ENCODE measurements at regions of chr11 and their contacts with region 1.

Region 1: DNA sequence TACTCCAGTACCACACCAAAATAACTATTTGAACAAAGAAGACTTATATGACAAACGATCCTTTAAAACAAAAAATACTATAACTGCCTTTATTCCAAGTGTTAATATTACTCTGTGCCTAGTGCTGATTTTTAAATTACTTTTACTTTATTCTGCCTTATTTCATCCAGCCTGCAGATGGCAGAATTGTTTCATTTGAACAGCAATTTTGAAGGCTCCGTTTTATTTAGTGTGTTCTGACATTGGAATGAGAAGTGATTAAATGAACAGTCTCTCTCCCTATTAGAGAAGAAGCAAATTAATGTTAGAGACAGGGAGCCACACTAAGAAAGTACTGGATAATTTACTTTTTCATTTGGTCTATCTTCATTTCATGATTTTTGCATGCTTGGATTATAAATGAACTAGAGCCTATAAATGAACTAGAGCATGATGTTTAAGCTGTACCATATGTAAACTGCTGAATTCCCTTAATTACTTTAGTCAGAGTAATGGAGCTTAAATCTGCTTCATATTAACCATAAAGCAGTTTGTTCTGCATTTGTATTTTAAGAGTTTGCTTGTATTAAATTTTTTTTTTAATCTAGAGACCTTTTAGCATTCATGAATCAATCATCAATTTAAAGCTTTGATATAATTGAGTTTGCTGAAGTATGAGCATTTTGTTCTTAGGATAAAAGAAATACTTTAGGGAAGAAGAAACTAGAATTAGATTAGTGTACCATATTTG is 9.8 kb downstream of the PDHX start:
- DNase-seq: no peak
- ATAC-seq: peak; percentile 34 to 60
- H3K4me3 ChIP-seq: no peak overlapping the region
- H3K27ac ChIP-seq: no peak overlapping the region
- H3K4me1 ChIP-seq: peaks cover 5% of the 10 kb centered on the region
- H3K27me3 ChIP-seq: no peaks in the 10 kb centered on the region

Region 2: DNA sequence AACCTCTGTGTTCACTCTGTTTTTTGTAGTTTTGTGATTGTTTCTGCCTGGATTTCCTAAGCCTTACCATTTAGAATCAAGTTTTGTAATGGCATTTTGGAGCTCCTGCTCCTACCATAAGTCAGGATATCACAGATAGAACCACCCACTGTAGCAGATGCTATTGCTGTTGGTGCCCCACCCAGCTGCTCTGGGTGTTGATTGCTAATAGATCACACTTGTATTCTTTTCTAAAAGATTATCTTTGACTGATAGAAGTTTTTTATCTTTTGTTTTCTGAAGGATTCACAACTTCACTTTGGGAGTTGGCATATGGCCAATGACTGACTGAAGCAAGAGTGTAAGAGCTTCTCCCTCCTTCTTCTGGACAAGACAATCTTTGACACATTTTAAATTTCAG is 229.4 kb before region 1 on chr11:
- intact Hi-C with region 1: no loop called
- DNase-seq: no peak
- ATAC-seq: no peak
- H3K4me3 ChIP-seq: no peak overlapping the region
- H3K27ac ChIP-seq: no peak overlapping the region
- H3K4me1 ChIP-seq: no peaks in the 10 kb centered on the region
- H3K27me3 ChIP-seq: no peaks in the 10 kb centered on the region

Region 3: DNA sequence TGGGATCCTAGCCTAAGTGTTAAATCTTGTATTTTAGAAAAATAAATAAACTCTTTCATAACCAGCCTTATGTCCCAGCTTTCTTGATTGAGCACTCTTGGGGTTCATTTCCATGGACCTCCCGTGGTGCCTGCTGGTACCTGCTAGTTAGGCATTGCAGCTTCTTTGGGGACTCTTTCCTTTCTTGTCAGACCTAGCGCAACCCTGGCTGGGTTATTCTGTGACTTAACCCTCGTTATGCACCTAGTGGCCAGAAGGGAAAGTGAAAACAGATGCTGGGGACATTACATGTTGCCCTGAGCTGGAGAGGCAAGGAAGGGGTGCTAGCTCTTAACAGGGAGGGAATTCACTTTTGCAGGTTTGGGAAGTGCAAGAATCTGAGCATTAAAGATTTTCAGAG is 56.8 kb before region 1 on chr11:
- intact Hi-C with region 1: no loop called
- DNase-seq: no peak
- ATAC-seq: no peak
- H3K4me3 ChIP-seq: no peak overlapping the region
- H3K27ac ChIP-seq: no peak overlapping the region
- H3K4me1 ChIP-seq: no peaks in the 10 kb centered on the region
- H3K27me3 ChIP-seq: no peaks in the 10 kb centered on the region

Region 4: GRCh38 chr11:35237860-35238715 is 311.8 kb after region 1 on chr11:
- intact Hi-C with region 1: loop called in 2 of 4 experiments (anchors 5 kb)
- DNase-seq: no peak
- ATAC-seq: peak in 1 of 2 donors; percentile 49
- H3K4me3 ChIP-seq: no peak overlapping the region
- H3K27ac ChIP-seq: no peak overlapping the region
- H3K4me1 ChIP-seq: peaks cover 3% of the 10 kb centered on the region
- H3K27me3 ChIP-seq: no peaks in the 10 kb centered on the region

Region 5: GRCh38 chr11:35485656-35486322 is 559.5 kb after region 1 on chr11:
- intact Hi-C with region 1: loop called in 2 of 4 experiments (anchors 5 to 10 kb)
- DNase-seq: peak; percentile 73 to 87 (median 85)
- ATAC-seq: peak; percentile 84 to 93
- H3K4me3 ChIP-seq: no peak overlapping the region
- H3K27ac ChIP-seq: no peak overlapping the region
- H3K4me1 ChIP-seq: no peaks in the 10 kb centered on the region
- H3K27me3 ChIP-seq: no peaks in the 10 kb centered on the region